IMR-90 (cell line): ENCODE measurements at regions of chr11 and their contacts with region 1.

Region 1: GRCh38 chr11:101436511-101437142 is 147.2 kb downstream of the TRPC6 start:
- DNase-seq: peak; percentile 49
- ATAC-seq: peak; percentile 68
- H3K4me3 ChIP-seq: no peak overlapping the region
- H3K27ac ChIP-seq: no peak overlapping the region
- H3K4me1 ChIP-seq: peaks cover 2% of the 10 kb centered on the region
- H3K27me3 ChIP-seq: no peaks in the 10 kb centered on the region
- CTCF ChIP-seq: peak; percentile 63
- POLR2A ChIP-seq: no peak
- RAD21 ChIP-seq: peak; percentile 55

Region 2: GRCh38 chr11:100980156-100980555 is 456.5 kb before region 1 on chr11:
- CTCF ChIA-PET with region 1: no interaction called
- POLR2A ChIA-PET with region 1: no interaction called
- dilution Hi-C with region 1: no loop called
- in situ Hi-C with region 1: no loop called
- intact Hi-C with region 1: loop called (anchors 1 kb)
- DNase-seq: peak; percentile 13
- ATAC-seq: no peak
- H3K4me3 ChIP-seq: no peak overlapping the region
- H3K27ac ChIP-seq: no peak overlapping the region
- H3K4me1 ChIP-seq: no peaks in the 10 kb centered on the region
- H3K27me3 ChIP-seq: no peaks in the 10 kb centered on the region
- CTCF ChIP-seq: peak; percentile 37
- POLR2A ChIP-seq: no peak
- RAD21 ChIP-seq: no peak

Region 3: GRCh38 chr11:101369835-101370234 is 66.8 kb before region 1 on chr11:
- CTCF ChIA-PET with region 1: no interaction called
- POLR2A ChIA-PET with region 1: no interaction called
- dilution Hi-C with region 1: no loop called
- in situ Hi-C with region 1: no loop called
- intact Hi-C with region 1: no loop called
- DNase-seq: no peak
- ATAC-seq: no peak
- H3K4me3 ChIP-seq: no peak overlapping the region
- H3K27ac ChIP-seq: no peak overlapping the region
- H3K4me1 ChIP-seq: no peaks in the 10 kb centered on the region
- H3K27me3 ChIP-seq: no peaks in the 10 kb centered on the region
- CTCF ChIP-seq: no peak
- POLR2A ChIP-seq: no peak
- RAD21 ChIP-seq: no peak

Region 4: GRCh38 chr11:101390539-101390938 is 46.1 kb before region 1 on chr11:
- CTCF ChIA-PET with region 1: interaction called, 6 read pairs
- POLR2A ChIA-PET with region 1: no interaction called
- dilution Hi-C with region 1: no loop called
- in situ Hi-C with region 1: no loop called
- intact Hi-C with region 1: loop called (anchors 1 kb)
- DNase-seq: peak; percentile 19
- ATAC-seq: peak; percentile 44; the same call in 1 of the 2 replicates
- H3K4me3 ChIP-seq: no peak overlapping the region
- H3K27ac ChIP-seq: no peak overlapping the region
- H3K4me1 ChIP-seq: no peaks in the 10 kb centered on the region
- H3K27me3 ChIP-seq: no peaks in the 10 kb centered on the region
- CTCF ChIP-seq: peak; percentile 45
- POLR2A ChIP-seq: no peak
- RAD21 ChIP-seq: peak; percentile 32; the same call in 1 of the 2 replicates